SK-N-SH (cell line): ENCODE measurements at regions of chr1 and their contacts with region 1.

Region 1: DNA sequence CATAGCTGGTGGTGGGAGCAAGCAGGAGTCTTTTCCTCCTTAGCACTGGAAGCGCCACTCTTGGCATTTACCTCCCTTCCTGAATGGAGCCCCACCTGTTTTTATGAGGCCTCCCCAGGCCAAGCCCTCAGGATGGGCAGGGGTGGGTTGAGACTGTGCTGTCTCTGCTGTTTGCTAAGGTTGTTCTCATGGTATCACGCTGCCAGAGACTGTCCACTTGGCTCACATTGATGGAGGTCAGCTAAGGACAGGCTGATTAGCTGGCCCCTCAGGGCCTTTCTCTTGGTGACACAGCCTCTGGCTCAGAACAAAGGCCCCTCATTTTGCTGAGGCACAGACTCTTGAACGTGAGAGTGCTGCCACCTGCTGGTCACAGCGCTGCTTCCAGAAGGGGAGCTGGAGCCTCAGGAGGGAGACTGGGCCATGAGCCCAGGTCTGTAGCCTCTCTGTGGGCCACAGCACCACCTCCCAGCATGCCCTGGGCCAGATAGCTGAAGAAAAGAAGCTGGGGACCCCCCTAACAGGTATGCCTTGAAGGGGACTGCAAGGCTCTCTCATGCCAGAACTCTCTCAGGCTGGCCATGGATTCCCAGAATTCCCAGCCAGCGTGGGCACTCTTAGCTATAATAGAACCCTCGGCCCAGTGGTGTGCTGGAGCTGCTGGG is 85.6 kb downstream of the CD58 start:
- DNase-seq: peak; percentile 85
- H3K4me3 ChIP-seq: peak overlapping the region in 1 of 2 experiments; percentile 33; a peak in 1 of 4 replicates
- H3K27ac ChIP-seq: peak overlapping the region in 1 of 2 experiments; percentile 58; a peak in 2 of 4 replicates
- H3K4me1 ChIP-seq: peaks cover 15 to 48% of the 10 kb centered on the region in 2 experiments; a peak in 3 of 4 replicates
- H3K27me3 ChIP-seq: no peaks in the 10 kb centered on the region
- CTCF ChIP-seq: peak; percentile 92
- EP300 ChIP-seq: no peak
- RAD21 ChIP-seq: peak; percentile 96

Region 2: DNA sequence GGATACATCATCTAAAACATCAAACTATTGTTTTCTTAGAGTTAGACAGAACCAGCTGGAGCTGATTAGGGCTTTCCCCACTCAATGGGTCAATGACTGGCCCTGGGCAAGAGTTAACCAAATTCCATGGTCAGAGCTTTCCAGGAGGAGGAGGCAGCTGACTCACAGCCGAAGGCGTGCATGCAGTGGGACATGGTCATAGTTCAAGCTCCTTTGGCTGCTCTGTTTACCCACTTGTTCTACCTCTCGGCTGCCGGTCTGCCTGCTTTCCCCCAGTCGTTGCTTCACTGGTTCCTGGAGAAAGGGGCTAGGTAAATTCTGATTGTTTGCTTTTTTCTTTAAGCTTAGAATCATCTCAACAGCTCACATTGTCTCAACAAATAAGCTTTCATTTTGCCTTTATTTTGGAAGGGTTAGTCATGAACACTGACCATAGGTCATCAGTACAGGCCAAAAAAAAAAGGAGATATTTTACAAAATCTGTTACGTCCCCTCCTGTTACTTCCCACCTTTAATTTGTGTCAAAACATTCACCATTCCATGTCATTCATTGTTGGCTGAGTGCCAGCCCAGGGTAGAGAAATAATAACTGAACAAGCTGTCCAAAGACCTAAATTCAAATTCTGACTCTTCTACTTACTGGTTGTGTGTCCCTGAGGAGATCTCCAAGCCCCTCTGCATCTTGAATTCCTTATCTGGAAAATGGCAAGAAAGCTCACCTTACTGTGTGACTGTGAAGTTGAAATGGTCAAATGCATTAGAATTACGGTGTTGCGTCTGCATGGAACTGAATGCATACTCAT is 362.0 kb before region 1 on chr1:
- CTCF ChIA-PET with region 1: interaction called, 41 read pairs
- POLR2A ChIA-PET with region 1: no interaction called
- DNase-seq: peak; percentile 60
- H3K4me3 ChIP-seq: no peak overlapping the region
- H3K27ac ChIP-seq: no peak overlapping the region; a peak in 1 of 4 replicates
- H3K4me1 ChIP-seq: peaks cover 0 to 12% of the 10 kb centered on the region in 2 experiments; a peak in 2 of 4 replicates
- H3K27me3 ChIP-seq: 0 out of 2 replicates have a peak, but pooled peaks cover 6% of the 10 kb centered on the region
- CTCF ChIP-seq: no peak
- EP300 ChIP-seq: 0 out of 4 replicates have a peak, but pooled peaks of 1 of the 2 experiments have one; percentile 28
- RAD21 ChIP-seq: no peak

Region 3: DNA sequence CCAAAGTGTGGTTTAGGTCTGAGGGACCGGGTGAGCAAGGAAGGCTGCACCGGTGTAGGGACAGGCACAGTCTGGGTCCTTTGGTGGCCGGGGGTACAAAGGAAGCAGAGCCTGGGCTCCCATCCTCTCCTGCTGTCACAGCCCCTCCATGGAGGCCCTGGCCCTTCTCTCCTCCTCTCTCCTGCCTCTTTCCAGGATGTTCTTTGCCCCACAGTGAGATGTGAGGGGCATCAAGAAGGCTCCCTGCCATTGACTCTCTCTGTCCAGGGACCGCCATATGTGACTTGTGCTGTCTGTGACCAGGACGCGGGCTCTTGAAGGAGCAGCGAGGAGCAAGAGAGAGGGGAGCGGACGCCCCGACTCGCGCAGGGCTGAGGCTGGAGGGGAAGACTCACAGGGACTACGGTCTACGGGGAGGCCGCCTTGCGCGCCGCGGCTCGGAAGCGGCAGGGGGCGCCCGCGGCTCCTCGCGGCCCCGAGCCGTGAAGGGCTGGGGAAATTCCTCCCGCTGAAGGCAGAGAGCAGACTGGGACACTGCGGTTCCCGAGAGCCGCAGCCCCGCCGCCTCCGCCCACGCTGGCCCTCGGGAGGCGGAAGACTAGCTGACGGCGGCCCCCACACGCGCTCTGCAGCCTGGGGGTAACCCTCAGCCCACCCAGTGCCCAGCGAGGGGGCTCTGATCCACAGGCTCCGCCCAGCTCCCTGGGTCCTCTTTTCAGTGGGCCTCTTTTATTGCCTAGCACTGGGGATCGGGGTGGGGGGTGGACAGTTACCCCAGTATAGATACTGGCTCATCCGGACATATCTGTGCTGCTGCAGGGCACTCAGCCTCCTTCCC is 333.2 kb before region 1 on chr1:
- CTCF ChIA-PET with region 1: interaction called, 1,099 read pairs
- POLR2A ChIA-PET with region 1: interaction called, 4 read pairs
- DNase-seq: peak; percentile 96
- H3K4me3 ChIP-seq: peak overlapping the region; percentile 50 to 51; a peak in 3 of 4 replicates
- H3K27ac ChIP-seq: peak overlapping the region in 1 of 2 experiments; percentile 60; a peak in 1 of 4 replicates
- H3K4me1 ChIP-seq: peaks cover 2 to 4% of the 10 kb centered on the region in 2 experiments; a peak in 2 of 4 replicates
- H3K27me3 ChIP-seq: no peaks in the 10 kb centered on the region
- CTCF ChIP-seq: peak; percentile 75
- EP300 ChIP-seq: no peak
- RAD21 ChIP-seq: peak; percentile 78

Region 4: DNA sequence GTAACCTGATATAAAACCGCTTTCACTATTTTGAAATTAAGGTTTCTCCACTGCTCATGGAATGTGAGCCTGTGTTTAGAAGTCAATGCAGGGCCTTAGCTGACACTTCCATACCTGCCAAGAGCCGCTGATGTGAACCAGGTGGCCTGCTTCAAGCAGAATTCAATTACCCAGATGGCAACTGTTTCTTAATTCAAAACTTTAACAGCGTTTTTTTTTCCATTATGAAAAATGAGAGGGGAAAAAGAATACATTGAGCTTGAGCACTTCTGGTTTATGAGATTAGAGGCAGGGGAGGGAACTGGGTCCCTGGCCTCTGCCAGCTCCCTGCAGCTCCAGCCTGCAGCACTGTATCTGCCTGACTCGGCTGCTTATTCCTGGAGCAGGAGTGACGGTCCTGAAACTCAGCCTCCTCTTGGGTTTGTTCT is 119.8 kb before region 1 on chr1:
- CTCF ChIA-PET with region 1: interaction called, 35 read pairs
- POLR2A ChIA-PET with region 1: interaction called, 3 read pairs
- DNase-seq: peak; percentile 78
- H3K4me3 ChIP-seq: peak overlapping the region in 1 of 2 experiments; percentile 21; a peak in 2 of 4 replicates
- H3K27ac ChIP-seq: peak overlapping the region in 1 of 2 experiments; percentile 91; a peak in 2 of 4 replicates
- H3K4me1 ChIP-seq: peaks cover 13 to 29% of the 10 kb centered on the region in 2 experiments; a peak in 3 of 4 replicates
- H3K27me3 ChIP-seq: no peaks in the 10 kb centered on the region
- CTCF ChIP-seq: no peak
- EP300 ChIP-seq: peak in 1 of 2 experiments; percentile 95; a peak in 2 of 4 replicates
- RAD21 ChIP-seq: peak; percentile 16; the same call in 1 of the 2 replicates

Region 5: DNA sequence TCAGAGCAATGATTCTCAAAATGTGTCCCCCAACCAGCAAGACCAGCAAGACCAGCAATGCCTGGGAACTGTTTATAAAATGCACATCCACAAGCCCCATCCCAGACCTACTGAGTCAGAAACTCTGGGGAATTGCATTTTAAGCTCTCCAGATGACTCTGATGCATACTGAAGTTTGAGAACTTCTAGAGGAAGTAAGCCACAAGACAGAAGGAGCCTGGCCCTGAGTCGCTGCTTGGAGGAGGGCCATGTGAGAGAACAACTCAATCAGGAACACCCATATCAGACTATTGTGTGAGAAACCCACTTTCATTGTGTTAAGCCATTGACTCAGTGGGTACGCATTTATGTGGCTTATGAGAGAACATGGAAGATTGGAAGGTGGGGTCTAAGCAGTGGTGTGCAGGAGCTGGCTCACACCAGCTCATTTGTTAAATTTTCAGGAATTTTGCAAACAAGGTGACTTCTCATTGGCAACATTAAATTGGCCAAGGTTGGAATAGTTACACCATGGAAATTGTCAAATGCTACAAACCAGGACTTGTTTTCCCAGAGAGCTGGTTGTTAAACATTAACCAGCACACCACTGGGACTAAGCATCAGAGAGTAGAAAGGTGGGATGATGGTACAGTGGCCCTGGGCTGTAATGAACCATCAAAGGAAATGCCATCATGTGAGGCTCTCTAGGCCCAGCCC is 73.3 kb before region 1 on chr1:
- CTCF ChIA-PET with region 1: interaction called, 63 read pairs
- POLR2A ChIA-PET with region 1: no interaction called
- DNase-seq: no peak
- H3K4me3 ChIP-seq: no peak overlapping the region
- H3K27ac ChIP-seq: 0 out of 4 replicates have a peak overlapping the region, but pooled peaks of 1 of the 2 experiments have one; percentile 12
- H3K4me1 ChIP-seq: peaks cover 4 to 12% of the 10 kb centered on the region in 2 experiments; a peak in 2 of 4 replicates
- H3K27me3 ChIP-seq: no peaks in the 10 kb centered on the region
- CTCF ChIP-seq: no peak
- EP300 ChIP-seq: no peak
- RAD21 ChIP-seq: no peak

Region 6: DNA sequence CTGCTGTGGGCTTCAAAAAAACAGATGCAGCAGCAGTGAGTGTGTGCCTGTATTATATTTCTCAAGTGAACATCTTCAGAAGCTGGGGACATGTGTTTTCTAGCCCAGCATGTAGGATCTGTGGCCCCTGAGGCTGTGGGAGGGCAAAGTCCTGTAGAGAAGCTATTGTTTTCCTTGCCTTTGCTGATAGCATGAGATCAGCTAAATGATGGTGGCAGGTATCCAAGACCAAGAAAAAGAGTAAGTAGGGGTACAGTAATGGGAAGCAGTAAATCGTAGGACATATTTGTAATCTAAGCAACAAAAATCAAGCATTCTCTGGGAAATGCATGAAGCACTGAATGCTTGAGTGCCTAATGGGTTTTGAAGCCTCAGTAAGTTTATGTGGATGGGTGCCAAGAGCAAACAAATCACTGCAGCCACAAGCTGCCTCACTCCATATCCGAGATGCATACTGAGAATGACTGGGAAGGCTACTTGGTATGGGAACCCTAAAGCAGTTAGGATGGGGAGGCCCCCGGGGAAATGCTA is 12.7 kb before region 1 on chr1:
- CTCF ChIA-PET with region 1: interaction called, 68 read pairs
- POLR2A ChIA-PET with region 1: interaction called, 6 read pairs
- DNase-seq: peak; percentile 57
- H3K4me3 ChIP-seq: no peak overlapping the region
- H3K27ac ChIP-seq: peak overlapping the region in 1 of 2 experiments; percentile 90; a peak in 2 of 4 replicates
- H3K4me1 ChIP-seq: peaks cover 6 to 27% of the 10 kb centered on the region in 2 experiments; a peak in 3 of 4 replicates
- H3K27me3 ChIP-seq: no peaks in the 10 kb centered on the region
- CTCF ChIP-seq: no peak
- EP300 ChIP-seq: peak in 1 of 2 experiments; percentile 29; a peak in 1 of 4 replicates
- RAD21 ChIP-seq: no peak

Region 7: DNA sequence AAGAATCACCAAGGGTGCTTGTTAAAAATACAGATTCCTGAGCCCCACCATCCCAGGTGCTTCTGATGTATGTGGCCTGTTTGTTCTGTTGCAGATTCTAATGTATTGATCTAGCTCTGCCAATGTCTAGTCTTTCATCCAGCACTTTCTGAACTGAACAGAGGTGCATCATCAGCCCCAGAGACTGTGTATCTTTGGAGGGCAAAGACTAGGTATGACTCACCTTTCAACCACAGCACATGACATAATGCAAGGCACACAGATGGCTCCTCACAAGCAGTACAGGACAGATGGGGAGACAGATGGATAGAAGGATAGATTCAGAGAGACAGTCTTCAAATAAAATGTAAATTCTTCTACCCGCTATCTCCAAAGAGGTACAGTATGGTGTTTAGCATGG is 53.3 kb after region 1 on chr1:
- CTCF ChIA-PET with region 1: no interaction called
- POLR2A ChIA-PET with region 1: no interaction called
- DNase-seq: no peak
- H3K4me3 ChIP-seq: no peak overlapping the region
- H3K27ac ChIP-seq: no peak overlapping the region
- H3K4me1 ChIP-seq: peaks cover 0 to 7% of the 10 kb centered on the region in 2 experiments; a peak in 1 of 4 replicates
- H3K27me3 ChIP-seq: no peaks in the 10 kb centered on the region
- CTCF ChIP-seq: no peak
- EP300 ChIP-seq: no peak
- RAD21 ChIP-seq: no peak

Region 8: GRCh38 chr1:116586741-116587143 is 101.5 kb after region 1 on chr1:
- CTCF ChIA-PET with region 1: no interaction called
- POLR2A ChIA-PET with region 1: no interaction called
- DNase-seq: peak; percentile 57
- H3K4me3 ChIP-seq: no peak overlapping the region
- H3K27ac ChIP-seq: peak overlapping the region in 1 of 2 experiments; percentile 67; a peak in 2 of 4 replicates
- H3K4me1 ChIP-seq: peaks cover 0 to 16% of the 10 kb centered on the region in 2 experiments; a peak in 2 of 4 replicates
- H3K27me3 ChIP-seq: no peaks in the 10 kb centered on the region
- CTCF ChIP-seq: no peak
- EP300 ChIP-seq: no peak; a peak in 1 of 4 replicates
- RAD21 ChIP-seq: no peak; the same call in 1 of the 2 replicates